ENCODE measurements at regions of chr5 and their contacts with region 1.

Region 1: GRCh38 chr5:4879693-4880303 is 260.3 kb upstream of the ADAMTS16 start:
- DNase-seq: peak; percentile 39
- ATAC-seq: peak; percentile 92
- H3K4me3 ChIP-seq: no peak overlapping the region
- H3K27ac ChIP-seq: no peak overlapping the region
- H3K4me1 ChIP-seq: no peaks in the 10 kb centered on the region
- H3K27me3 ChIP-seq: peaks cover 5% of the 10 kb centered on the region; the same call in 1 of the 2 replicates
- CTCF ChIP-seq: peak; percentile 53 to 90 (median 89); a peak in 5 of 6 replicates
- POLR2A ChIP-seq: no peak
- RAD21 ChIP-seq: peak; percentile 83

Region 2: GRCh38 chr5:4893063-4893744 is 13.4 kb after region 1 on chr5:
- CTCF ChIA-PET with region 1: no interaction called
- POLR2A ChIA-PET with region 1: no interaction called
- RAD21 ChIA-PET with region 1: no interaction called
- intact Hi-C with region 1: no loop called
- DNase-seq: no peak
- ATAC-seq: no peak
- H3K4me3 ChIP-seq: no peak overlapping the region
- H3K27ac ChIP-seq: no peak overlapping the region
- H3K4me1 ChIP-seq: no peaks in the 10 kb centered on the region
- H3K27me3 ChIP-seq: no peaks in the 10 kb centered on the region
- CTCF ChIP-seq: no peak
- POLR2A ChIP-seq: no peak
- RAD21 ChIP-seq: no peak

Region 3: GRCh38 chr5:4941957-4942830 is 62.4 kb after region 1 on chr5:
- CTCF ChIA-PET with region 1: interaction called, 3 read pairs
- POLR2A ChIA-PET with region 1: no interaction called
- RAD21 ChIA-PET with region 1: interaction called in 1 of 2 experiments, 3 read pairs
- intact Hi-C with region 1: loop called (anchors 1 kb)
- DNase-seq: no peak
- ATAC-seq: peak; percentile 82
- H3K4me3 ChIP-seq: no peak overlapping the region
- H3K27ac ChIP-seq: no peak overlapping the region
- H3K4me1 ChIP-seq: no peaks in the 10 kb centered on the region
- H3K27me3 ChIP-seq: 0 out of 2 replicates have a peak, but pooled peaks cover 4% of the 10 kb centered on the region
- CTCF ChIP-seq: peak; percentile 19 to 96 (median 93); a peak in 5 of 6 replicates
- POLR2A ChIP-seq: no peak
- RAD21 ChIP-seq: peak; percentile 36

Measured in HCT116 (cell line).